H1 (cell line): ENCODE measurements at regions of chr1 and their contacts with region 1.

Region 1: DNA sequence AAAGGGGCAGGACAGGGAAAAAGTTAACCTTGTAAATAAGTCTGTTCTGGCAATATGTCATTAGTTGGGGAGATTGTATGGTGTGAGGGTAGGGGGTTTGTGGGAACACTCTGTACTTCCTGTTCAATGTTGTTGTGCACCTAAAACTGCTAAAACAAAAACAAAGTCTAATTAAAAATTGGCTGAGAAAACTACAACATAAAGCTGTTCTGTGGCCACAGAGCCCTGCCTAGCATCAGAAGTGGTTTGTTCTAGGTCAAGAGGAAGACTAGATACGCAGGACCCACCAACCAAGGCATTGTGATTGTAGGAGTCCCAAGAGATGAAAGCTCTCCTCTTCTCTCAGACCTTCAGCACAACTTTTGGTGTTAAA is 81.0 kb upstream of the LRRC8D start:
- DNase-seq: no peak
- H3K4me3 ChIP-seq: no peak overlapping the region
- H3K27ac ChIP-seq: no peak overlapping the region
- H3K4me1 ChIP-seq: no peaks in the 10 kb centered on the region
- H3K27me3 ChIP-seq: no peaks in the 10 kb centered on the region
- CTCF ChIP-seq: no peak
- EP300 ChIP-seq: no peak
- POLR2A ChIP-seq: no peak
- RAD21 ChIP-seq: no peak

Region 2: GRCh38 chr1:89701746-89702241 is 38.0 kb before region 1 on chr1:
- CTCF ChIA-PET with region 1: no interaction called
- POLR2A ChIA-PET with region 1: no interaction called
- DNase-seq: no peak
- H3K4me3 ChIP-seq: no peak overlapping the region
- H3K27ac ChIP-seq: no peak overlapping the region
- H3K4me1 ChIP-seq: no peaks in the 10 kb centered on the region
- H3K27me3 ChIP-seq: no peaks in the 10 kb centered on the region
- CTCF ChIP-seq: no peak
- EP300 ChIP-seq: no peak
- POLR2A ChIP-seq: no peak
- RAD21 ChIP-seq: no peak

Region 3: DNA sequence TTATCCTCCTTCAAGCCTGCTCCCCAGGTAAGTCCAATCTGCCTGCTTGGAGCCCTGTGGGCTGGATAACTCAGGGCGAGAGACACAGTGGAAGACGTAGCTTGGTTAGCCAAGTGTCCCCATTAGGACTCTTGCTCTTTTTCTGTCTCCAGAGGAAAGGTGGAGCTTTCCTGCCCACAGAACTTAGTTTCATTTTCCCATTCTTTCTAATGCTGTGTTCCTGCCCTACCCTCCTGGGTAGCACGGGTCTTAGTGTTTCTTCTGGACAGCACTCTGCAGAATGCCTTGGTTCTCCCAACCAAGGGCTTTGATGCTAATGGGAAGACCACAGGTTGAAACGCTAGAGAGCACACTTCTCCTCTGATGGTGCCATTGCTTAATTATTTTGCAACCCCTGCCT is 11.4 kb before region 1 on chr1:
- CTCF ChIA-PET with region 1: interaction called, 10 read pairs
- POLR2A ChIA-PET with region 1: no interaction called
- DNase-seq: no peak
- H3K4me3 ChIP-seq: no peak overlapping the region
- H3K27ac ChIP-seq: no peak overlapping the region
- H3K4me1 ChIP-seq: no peaks in the 10 kb centered on the region
- H3K27me3 ChIP-seq: no peaks in the 10 kb centered on the region
- CTCF ChIP-seq: no peak
- EP300 ChIP-seq: no peak
- POLR2A ChIP-seq: no peak
- RAD21 ChIP-seq: no peak